Right ventricle myocardium superior (tissue), 1 donor: ENCODE measurements at regions of chr18 and their contacts with region 1.

Region 1: GRCh38 chr18:59837586-59837985 is 62.2 kb upstream of the PMAIP1 start:
- DNase-seq: no peak
- ATAC-seq: peak; percentile 49

Region 2: DNA sequence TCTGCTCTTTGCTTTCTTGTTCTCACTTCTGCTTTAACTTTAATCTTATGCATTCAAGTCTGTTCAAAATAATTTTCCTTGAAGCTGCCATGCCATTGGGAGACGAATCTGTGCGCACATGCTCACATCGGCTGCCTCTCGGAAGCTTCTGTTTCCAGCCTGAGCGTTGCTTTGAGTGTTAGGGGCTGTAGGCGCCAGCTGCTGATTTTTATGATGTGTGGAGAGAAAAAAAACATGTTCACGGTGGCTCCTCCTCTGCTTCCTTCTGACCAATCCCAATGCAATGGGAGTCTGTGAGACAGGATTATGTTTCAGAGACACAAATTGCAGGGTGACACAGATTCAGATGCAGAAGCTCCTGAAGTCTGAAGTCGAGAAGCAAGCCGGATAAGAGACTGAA is 535.0 kb after region 1 on chr18 and contains the start of gene MC4R:
- intact Hi-C with region 1: no loop called
- DNase-seq: no peak
- ATAC-seq: peak; percentile 43
- total RNA-seq, gene MC4R: not detected

Region 3: GRCh38 chr18:60549338-60549960 is 711.9 kb after region 1 on chr18:
- intact Hi-C with region 1: loop called (anchors 5 kb)
- DNase-seq: no peak
- ATAC-seq: no peak